ENCODE measurements at regions of chr20 and their contacts with region 1.

Region 1: GRCh38 chr20:35994994-35995453 is 26.6 kb downstream of the CNBD2 start:
- DNase-seq: peak; percentile 72 to 92 (median 85)

Region 2: GRCh38 chr20:36043892-36044515 is 49.0 kb after region 1 on chr20:
- intact Hi-C with region 1: loop called (anchors 10 kb)
- DNase-seq: no peak

Region 3: DNA sequence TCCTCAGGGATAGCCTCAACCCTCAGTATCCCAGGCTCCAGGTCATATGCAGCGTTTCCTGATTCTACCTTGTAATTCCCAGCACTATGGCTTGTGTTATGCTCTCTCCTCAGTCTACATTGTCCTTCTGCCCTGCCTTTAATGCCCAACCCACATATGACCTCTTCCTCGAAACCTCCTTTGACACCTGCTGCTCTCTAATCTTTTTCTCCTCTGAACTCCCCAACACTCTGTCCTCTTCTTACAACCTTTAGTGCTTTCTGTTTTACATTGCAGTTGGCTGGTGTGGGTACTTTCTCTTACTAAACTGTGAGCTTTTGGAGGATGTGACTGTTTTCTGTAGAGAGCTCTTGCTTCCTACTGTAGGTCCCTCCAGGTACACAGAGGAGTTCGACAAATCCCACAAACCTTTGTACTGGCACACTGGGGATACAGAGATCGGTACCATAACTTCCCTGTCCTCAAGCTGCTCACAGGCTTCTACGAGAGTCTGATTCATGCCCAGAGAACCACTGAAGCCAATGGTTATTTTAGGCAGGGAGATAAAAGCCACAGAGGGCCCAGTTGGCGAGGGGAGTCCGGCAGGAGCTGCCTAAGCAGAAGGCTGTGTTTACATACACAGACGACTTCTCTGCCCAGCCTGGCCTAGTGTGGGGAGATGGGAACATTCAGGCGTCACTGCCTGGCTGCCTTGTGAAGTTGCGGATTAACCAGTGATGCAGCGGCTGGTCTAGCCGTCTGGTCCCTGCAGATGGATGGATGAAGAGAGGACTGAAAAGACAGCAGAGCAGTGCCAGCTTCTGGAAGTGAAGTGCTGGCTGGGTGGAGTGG is 151.1 kb after region 1 on chr20:
- intact Hi-C with region 1: loop called (anchors 2 kb)
- DNase-seq: peak in 1 of 42 donors; percentile 44

Region 4: GRCh38 chr20:36199345-36200257 is 204.6 kb after region 1 on chr20:
- intact Hi-C with region 1: loop called (anchors 10 kb)
- DNase-seq: peak; percentile 49 to 95 (median 88)

Measured in head of caudate nucleus (tissue), 42 donors.